IMR-90 (cell line): ENCODE measurements at regions of chr17 and their contacts with region 1.

Region 1: DNA sequence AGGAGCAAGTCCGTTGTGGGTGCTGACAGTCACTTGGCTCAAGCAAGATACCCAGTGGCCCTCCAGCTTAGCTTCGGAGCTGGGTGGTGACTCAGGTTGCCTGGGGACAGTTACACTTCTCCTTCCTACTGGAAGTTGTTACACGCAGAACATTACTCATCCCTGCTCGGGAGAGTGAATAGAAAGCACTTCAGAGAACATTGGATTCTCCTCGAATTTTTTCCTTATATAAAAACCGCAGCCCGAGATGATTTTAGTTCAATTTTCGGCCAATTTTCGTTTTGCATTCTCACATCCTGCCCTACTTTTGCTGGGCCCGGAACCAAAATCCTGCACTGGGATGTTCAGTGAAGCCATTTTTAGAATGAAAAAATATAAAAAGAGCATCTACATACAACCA is 99.7 kb downstream of the ELAC2 start:
- DNase-seq: no peak
- ATAC-seq: no peak
- H3K4me3 ChIP-seq: no peak overlapping the region
- H3K27ac ChIP-seq: no peak overlapping the region
- H3K4me1 ChIP-seq: no peaks in the 10 kb centered on the region
- H3K27me3 ChIP-seq: no peaks in the 10 kb centered on the region
- CTCF ChIP-seq: no peak
- POLR2A ChIP-seq: no peak
- RAD21 ChIP-seq: no peak

Region 2: DNA sequence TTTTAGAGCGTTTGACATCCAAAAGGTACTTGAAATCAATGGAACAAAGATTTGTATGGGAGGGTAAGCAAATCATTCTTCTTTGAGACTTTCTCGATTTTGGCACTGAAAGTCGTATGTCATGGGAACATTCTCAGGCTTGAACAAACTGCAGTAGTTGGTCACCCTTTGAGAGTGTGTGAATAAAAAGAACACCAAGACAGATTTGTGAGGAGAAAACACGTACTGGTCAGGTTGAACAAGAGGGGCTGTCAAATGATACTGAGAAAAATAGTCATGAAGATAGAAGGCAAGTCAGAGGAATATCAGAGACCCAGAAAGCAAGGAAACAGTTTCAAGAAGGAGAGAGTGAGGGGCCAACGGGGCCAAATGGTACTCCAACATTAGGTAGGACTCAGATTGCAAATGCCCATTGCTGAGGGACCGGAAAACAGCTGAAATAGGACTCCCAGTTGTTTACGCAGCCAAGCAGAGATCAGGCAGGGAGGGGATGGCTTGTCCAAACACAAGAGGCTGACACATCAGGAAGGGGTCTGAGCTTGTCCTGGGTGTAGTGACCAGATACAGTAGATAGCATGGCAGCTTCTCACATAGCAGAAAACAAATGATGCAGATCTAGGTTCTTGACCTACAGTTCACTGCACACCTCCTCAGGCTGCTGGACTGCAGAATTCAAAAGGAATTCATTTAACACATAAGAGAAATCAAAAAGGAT is 327.0 kb before region 1 on chr17:
- CTCF ChIA-PET with region 1: no interaction called
- POLR2A ChIA-PET with region 1: no interaction called
- dilution Hi-C with region 1: no loop called
- in situ Hi-C with region 1: no loop called
- intact Hi-C with region 1: no loop called
- DNase-seq: peak; percentile 76
- ATAC-seq: peak; percentile 92
- H3K4me3 ChIP-seq: no peak overlapping the region
- H3K27ac ChIP-seq: peak overlapping the region; percentile 19; the same call in 1 of the 2 replicates
- H3K4me1 ChIP-seq: peaks cover 6% of the 10 kb centered on the region
- H3K27me3 ChIP-seq: no peaks in the 10 kb centered on the region
- CTCF ChIP-seq: no peak
- POLR2A ChIP-seq: no peak
- RAD21 ChIP-seq: no peak

Region 3: DNA sequence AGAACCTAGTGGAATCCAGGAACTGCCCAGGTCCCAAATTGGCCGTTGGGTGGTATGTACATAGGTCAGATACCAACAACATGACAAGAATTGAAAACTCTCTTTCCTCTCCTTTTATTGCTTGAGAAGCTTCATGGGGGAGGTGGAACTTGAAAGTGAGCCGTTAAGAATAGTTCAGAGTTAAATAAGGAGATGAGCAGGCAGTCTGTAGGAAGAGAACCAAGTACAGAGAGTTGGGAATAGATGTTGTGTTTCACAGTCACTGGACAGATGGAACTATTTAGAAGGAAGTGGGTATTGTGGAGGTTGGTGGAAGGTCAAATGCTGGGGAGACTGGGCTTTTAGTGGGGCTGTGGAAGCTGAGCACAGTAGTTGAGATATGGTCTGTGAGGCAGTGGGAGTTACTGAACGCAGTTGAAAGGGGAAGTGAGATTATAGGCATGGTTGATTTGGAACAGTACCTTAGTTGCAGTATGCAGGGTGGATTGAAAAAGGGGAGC is 102.5 kb before region 1 on chr17:
- CTCF ChIA-PET with region 1: no interaction called
- POLR2A ChIA-PET with region 1: no interaction called
- dilution Hi-C with region 1: no loop called
- in situ Hi-C with region 1: loop called (anchors 25 kb)
- intact Hi-C with region 1: no loop called
- DNase-seq: no peak
- ATAC-seq: no peak
- H3K4me3 ChIP-seq: no peak overlapping the region
- H3K27ac ChIP-seq: no peak overlapping the region
- H3K4me1 ChIP-seq: no peaks in the 10 kb centered on the region
- H3K27me3 ChIP-seq: no peaks in the 10 kb centered on the region
- CTCF ChIP-seq: no peak
- POLR2A ChIP-seq: no peak
- RAD21 ChIP-seq: no peak

Region 4: DNA sequence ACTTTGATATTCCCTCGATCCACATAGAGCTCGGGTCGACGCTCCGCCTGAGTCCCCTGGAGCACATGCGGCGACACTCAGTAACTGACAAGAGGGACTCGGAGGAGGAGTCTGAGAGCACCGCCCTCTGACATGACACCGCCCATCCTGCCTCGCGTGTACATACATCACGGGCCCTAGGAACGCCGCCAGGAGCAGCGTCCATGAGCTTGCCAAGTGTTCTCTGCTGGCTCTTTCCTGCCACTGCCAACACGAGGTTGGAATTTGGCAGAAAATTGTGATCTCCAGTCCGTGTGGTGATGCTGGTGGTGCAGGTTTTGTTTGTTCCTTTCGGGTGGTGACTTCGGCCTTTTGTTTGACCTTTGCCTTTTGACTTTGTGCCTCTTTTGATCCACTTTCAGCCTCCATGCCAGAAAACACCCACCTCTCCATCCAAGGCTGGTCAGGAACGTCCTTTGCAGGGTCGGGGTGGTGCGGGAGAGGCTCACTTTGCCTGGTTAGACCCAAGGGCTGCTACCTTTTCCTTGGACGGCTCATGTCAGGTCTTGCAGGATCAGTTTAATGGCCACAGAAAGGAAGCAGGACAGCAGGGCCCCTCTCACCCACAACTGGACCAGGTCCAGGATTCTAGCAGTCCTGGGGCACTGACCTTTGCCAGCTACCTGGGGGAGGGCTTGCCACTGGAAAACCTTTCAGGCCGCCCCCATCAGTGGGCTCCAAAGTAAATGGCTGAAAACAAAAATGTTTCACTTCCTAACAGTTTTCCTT is 72.1 kb after region 1 on chr17:
- CTCF ChIA-PET with region 1: no interaction called
- POLR2A ChIA-PET with region 1: no interaction called
- dilution Hi-C with region 1: no loop called
- in situ Hi-C with region 1: no loop called
- intact Hi-C with region 1: no loop called
- DNase-seq: no peak
- ATAC-seq: no peak
- H3K4me3 ChIP-seq: no peak overlapping the region
- H3K27ac ChIP-seq: no peak overlapping the region
- H3K4me1 ChIP-seq: no peaks in the 10 kb centered on the region
- H3K27me3 ChIP-seq: no peaks in the 10 kb centered on the region
- CTCF ChIP-seq: no peak
- POLR2A ChIP-seq: no peak
- RAD21 ChIP-seq: no peak

Region 5: GRCh38 chr17:13244513-13244912 is 326.4 kb after region 1 on chr17:
- CTCF ChIA-PET with region 1: no interaction called
- POLR2A ChIA-PET with region 1: no interaction called
- dilution Hi-C with region 1: no loop called
- in situ Hi-C with region 1: no loop called
- intact Hi-C with region 1: no loop called
- DNase-seq: no peak
- ATAC-seq: no peak
- H3K4me3 ChIP-seq: no peak overlapping the region
- H3K27ac ChIP-seq: no peak overlapping the region
- H3K4me1 ChIP-seq: no peaks in the 10 kb centered on the region
- H3K27me3 ChIP-seq: peaks cover 3% of the 10 kb centered on the region
- CTCF ChIP-seq: no peak
- POLR2A ChIP-seq: no peak
- RAD21 ChIP-seq: no peak